RWPE1 (cell line): ENCODE measurements at regions of chr11 and their contacts with region 1.

Region 1: DNA sequence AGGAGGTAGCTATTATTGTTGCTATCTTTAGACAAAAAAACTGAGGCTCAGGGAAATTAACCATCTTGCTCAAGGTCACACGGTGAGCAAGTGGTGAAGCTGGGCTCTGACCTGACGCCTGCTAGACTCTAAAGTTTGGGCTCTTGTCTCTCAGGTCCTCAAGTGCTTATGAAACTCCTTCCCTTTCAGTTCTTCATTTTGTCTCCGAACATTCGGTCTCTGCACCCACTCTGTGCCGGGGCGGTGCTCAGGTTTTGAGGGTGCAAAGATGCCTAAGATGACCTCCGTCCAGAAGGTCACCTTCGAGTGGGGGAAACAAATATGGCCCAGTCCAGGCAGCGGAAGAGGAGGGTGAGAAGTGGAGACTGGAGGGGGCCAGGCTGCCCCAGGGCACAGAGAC is 16.0 kb downstream of the OVOL1 start:
- DNase-seq: no peak
- H3K27ac ChIP-seq: no peak overlapping the region
- CTCF ChIP-seq: no peak

Region 2: GRCh38 chr11:65743928-65744698 is 58.7 kb before region 1 on chr11:
- CTCF ChIA-PET with region 1: no interaction called
- POLR2A ChIA-PET with region 1: no interaction called
- DNase-seq: peak; percentile 34
- H3K27ac ChIP-seq: no peak overlapping the region
- CTCF ChIP-seq: 0 out of 2 replicates have a peak, but pooled peaks have one; percentile 14

Region 3: DNA sequence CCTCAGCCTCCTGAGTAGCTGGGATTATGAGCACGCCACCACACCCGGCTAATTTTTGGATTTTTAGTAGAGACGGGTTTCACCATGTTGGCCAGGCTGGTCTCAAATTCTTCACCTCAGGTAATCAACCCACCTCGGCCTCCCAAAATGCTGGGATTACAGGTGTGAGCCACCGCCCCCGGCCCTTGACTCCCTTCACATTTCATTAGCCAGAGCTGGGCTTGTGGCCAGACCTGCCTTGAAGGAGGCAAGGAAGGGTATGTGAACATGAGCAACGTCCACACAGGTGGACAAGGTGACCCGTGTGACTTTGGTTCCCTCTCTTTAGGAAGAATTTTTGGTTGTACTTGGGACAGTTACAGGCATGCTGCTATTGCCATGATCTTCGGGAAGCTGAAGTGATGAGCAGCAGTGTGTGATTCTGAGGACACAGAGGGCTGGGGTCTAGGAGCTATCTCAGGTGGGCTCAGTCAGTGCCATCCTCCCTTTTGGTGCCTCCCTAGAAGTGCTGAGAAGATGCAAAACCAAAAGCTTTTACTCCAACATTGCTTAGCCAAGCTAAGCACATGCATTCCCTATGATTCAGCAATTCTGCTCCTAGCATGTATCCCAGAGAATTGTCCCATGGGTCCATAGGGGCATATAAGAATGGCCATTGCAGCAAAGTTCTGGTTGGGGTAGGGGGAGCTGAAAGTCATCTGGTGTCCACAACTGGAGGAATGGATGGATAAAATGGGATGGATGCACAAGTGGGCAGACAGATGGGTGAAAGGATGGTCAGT is 28.1 kb before region 1 on chr11:
- CTCF ChIA-PET with region 1: interaction called, 13 read pairs
- POLR2A ChIA-PET with region 1: interaction called, 12 read pairs
- DNase-seq: no peak
- H3K27ac ChIP-seq: 0 out of 2 replicates have a peak overlapping the region, but pooled peaks have one; percentile 8
- CTCF ChIP-seq: no peak

Region 4: DNA sequence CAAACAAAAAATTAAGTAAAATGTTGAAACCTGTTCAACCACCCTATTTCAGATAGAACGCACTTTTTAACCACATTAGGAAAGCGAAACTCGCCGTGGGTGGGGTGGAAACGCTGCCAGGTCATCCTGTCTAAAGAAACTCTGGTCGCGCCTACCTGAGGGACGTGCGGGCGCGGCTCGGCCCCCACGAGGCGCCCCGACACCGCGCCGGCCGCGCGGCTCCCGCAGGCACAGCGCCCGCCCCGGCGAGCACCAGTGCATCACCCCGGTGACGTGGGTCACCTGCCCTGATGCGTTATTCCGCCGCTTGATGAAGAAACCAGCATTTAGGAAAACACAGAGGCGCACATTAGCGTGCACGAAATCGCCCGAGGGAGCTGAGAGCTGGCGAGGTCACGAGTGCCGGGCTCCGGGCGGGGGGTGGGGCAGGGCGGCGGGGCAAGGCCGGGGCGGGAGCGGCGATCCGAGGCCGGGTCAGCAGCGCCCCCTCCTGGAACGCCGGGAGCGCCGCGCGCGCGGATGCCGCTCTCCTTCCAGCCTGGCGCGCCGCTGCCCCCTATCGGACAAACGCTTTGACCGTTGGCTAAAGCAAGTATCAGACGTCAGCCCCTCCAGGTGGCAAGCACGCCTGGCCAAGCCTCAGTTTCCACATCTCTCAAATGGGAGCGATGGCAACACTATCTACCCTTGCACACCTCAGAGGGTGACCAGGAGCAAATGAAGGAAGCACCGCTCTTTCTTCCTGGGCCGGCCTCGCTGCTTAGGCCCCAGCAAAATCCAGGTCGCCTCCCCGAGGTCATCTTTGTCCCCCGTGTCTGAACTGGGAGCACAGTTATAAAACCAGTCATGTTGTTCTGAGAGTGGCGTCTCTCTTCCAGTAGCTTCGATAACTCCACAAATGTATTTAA is 15.2 kb after region 1 on chr11:
- CTCF ChIA-PET with region 1: interaction called, 13 read pairs
- POLR2A ChIA-PET with region 1: no interaction called
- DNase-seq: peak; percentile 86
- H3K27ac ChIP-seq: peak overlapping the region; percentile 81
- CTCF ChIP-seq: peak; percentile 99